ENCODE measurements at regions of chr9 and their contacts with region 1.

Region 1: DNA sequence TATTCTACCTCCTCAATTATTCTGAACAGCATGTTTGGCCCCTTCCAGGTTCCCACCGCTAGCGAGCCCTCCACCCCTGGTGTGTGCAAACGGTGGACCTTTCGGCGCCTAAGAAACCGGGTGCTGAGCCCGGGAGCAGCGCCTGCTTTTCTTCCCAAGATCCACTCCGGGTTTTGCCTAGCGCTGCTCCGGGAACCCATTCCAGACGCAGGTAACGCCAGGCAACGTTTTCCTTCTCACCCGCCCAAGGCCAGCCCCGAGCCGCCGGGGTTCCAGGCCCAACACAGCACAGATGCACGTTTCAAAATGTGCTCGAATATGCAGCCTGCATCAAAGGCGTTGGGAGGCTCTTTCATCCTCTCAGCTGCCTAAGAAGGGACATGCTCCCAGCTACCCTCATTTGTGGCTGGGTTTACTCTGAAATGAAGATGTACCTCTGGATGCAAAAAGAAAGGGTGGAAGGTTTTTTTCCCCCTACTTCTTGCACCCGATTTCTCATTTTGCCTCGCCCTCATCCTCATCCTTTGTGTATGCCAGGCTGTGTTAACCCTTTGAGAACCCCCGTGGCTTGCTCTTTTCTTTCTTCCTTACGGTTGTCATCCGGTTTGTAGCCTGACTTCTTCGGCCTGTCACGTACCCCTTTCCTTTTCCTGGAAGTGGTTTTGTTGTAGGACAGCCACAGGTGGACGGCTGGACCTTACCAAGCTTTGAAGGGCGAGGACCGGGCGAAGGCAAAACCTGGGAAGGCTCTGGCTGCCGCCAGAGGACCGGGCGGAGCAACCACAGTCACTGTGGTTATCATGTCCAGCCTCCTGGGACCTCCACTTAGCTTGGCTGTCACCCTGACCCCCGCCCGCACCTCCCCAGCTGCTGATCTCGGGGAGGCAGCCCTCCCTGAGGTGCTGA is 226.9 kb downstream of the SMARCA2 start:
- DNase-seq: peak; percentile 83 to 89 (median 83)
- ATAC-seq: peak; percentile 98
- H3K4me3 ChIP-seq: no peak overlapping the region
- H3K4me1 ChIP-seq: peaks cover 5% of the 10 kb centered on the region
- CTCF ChIP-seq: no peak

Region 2: GRCh38 chr9:2469681-2470221 is 227.7 kb after region 1 on chr9:
- intact Hi-C with region 1: loop called in 1 of 2 experiments (anchors 10 kb)
- DNase-seq: peak; percentile 52 to 67 (median 59)
- ATAC-seq: peak; percentile 56
- H3K4me3 ChIP-seq: no peak overlapping the region
- H3K4me1 ChIP-seq: peaks cover 2% of the 10 kb centered on the region
- CTCF ChIP-seq: no peak

Measured in mucosa of descending colon (tissue), 3 donors.